Common myeloid progenitor, CD34-positive (primary cell): ENCODE measurements at regions of chr12 and their contacts with region 1.

Region 1: GRCh38 chr12:56688129-56688845 is at the start of gene PTGES3:
- DNase-seq: peak; percentile 97 to 99 (median 98)
- H3K4me3 ChIP-seq: peak within 1 kb of the TSS; percentile 91 to 100 (median 96)
- H3K27ac ChIP-seq: peak within 1 kb of the TSS; percentile 97 to 99
- H3K4me1 ChIP-seq: peaks cover 12 to 45% (median 34%) of the 10 kb centered on the region in 4 experiments
- H3K27me3 ChIP-seq: no peaks in the 10 kb centered on the region

Region 2: GRCh38 chr12:56188131-56188925 is 500.0 kb before region 1 on chr12:
- CTCF ChIA-PET with region 1: no interaction called
- POLR2A ChIA-PET with region 1: no interaction called
- DNase-seq: no peak
- H3K4me3 ChIP-seq: peak overlapping the region; percentile 65 to 95 (median 88)
- H3K27ac ChIP-seq: peak overlapping the region; percentile 66 to 84
- H3K4me1 ChIP-seq: peaks cover 8 to 36% (median 30%) of the 10 kb centered on the region in 4 experiments
- H3K27me3 ChIP-seq: no peaks in the 10 kb centered on the region

Region 3: DNA sequence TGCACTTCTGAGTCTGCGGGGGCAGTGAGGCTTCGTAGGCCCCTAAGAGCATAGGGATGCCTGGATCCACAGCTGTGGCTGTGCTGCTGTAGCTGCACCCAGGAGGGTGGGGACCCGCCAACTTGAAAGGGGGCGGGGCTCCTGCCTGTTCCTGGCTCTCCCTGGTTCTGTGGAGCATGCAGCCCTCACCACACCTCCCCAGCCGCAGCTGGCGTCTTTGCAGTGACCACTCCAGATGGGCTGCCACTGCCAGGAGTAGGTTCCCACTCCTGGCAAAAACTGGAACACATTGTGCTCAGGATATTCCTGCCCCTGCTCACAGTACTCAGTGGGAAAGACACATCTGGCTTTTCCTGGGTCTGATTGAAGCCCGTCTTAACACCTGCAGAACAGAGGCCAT is 274.9 kb before region 1 on chr12:
- CTCF ChIA-PET with region 1: no interaction called
- POLR2A ChIA-PET with region 1: no interaction called
- DNase-seq: no peak
- H3K4me3 ChIP-seq: no peak overlapping the region
- H3K27ac ChIP-seq: no peak overlapping the region
- H3K4me1 ChIP-seq: no peaks in the 10 kb centered on the region
- H3K27me3 ChIP-seq: no peaks in the 10 kb centered on the region

Region 4: DNA sequence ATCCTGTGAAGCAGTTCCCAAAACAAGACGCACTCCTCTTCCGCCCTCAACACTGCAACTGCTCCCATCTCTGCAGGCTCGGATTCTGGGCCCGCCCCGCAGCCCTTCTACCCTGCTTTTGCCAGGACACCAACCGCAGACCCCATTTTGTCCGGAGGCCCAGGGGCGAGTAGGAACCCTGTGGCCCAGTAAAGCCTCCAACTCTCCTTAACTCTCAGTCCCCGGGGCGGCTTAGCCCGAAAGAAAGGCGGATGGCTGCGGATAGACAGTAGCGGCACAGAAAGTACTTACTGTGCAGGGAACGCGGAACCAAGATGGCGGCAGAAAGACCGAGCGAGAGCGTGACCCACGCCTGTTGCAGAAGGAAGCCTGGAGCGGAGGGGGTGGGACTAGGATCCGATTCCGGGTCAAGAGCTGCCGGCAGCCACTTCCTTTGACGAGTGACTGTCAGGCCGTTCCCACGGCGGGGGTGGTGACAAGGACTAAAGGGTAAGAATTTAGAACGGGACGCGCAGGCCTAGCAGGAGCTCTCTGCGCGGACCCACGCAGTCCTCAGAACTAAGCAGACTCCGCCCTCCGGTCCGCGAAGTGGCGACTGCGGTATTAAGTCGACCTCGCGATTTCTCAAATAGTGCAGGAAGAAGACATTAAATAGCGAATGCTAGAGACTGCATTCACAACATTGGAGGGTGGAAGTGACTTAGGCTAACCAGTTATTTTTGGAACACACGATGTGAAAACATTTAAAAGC is 36.9 kb after region 1 on chr12 and contains the start of gene NACA:
- CTCF ChIA-PET with region 1: interaction called, 4 read pairs
- POLR2A ChIA-PET with region 1: interaction called, 10 read pairs
- DNase-seq: peak; percentile 99 to 100 (median 99)
- H3K4me3 ChIP-seq: peak within 1 kb of the TSS; percentile 78 to 100 (median 97)
- H3K27ac ChIP-seq: peak within 1 kb of the TSS; percentile 90 to 96
- H3K4me1 ChIP-seq: peaks cover 30 to 54% (median 51%) of the 10 kb centered on the region in 4 experiments
- H3K27me3 ChIP-seq: no peaks in the 10 kb centered on the region